Mammary epithelial cell (primary cell): ENCODE measurements at regions of chr10 and their contacts with region 1.

Region 1: GRCh38 chr10:114024876-114025610 is 18.6 kb upstream of the ADRB1 start:
- DNase-seq: no peak
- H3K4me3 ChIP-seq: no peak overlapping the region
- H3K27ac ChIP-seq: no peak overlapping the region
- H3K4me1 ChIP-seq: peaks cover 39% of the 10 kb centered on the region
- H3K27me3 ChIP-seq: no peaks in the 10 kb centered on the region
- CTCF ChIP-seq: no peak

Region 2: DNA sequence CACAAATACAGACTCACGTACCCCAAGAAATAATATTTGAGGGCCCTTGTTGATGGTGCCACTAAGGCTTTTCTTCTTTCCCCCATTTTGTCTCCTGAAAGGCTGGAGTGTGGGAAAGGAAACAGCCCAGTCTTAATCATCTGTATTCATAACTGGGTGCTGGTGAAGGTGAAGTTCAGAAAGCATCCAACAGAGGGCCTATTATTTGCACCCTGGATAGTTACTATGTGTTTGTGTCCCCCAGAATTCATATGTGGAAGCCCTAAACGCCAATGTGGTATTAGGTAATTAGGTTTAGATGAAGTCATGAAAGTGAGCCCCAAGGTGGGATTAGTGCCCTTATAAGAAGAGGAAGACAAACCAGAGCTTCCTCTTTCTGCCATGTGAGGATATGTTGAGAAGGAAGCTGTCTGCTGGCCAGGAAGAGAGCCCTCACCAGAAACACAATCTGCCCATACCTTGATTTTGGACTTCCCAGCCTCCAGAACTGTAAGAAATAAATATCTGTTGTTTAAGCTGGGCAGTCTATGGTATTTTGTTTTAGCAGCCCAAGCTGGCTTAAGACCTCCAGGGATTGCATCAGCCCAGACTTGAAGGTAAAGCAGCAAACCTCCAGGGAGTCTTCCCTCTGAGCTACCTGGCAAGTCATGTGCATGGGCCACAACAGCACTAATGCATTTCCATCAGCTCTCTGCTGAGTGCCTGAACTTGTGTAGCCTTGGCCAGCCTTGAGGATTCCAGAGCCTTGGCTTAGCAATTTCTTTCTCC is 71.4 kb before region 1 on chr10:
- CTCF ChIA-PET with region 1: no interaction called
- dilution Hi-C with region 1: loop called (anchors 5 kb)
- in situ Hi-C with region 1: no loop called
- intact Hi-C with region 1: no loop called
- DNase-seq: no peak
- H3K4me3 ChIP-seq: no peak overlapping the region
- H3K27ac ChIP-seq: no peak overlapping the region
- H3K4me1 ChIP-seq: peaks cover 18% of the 10 kb centered on the region
- H3K27me3 ChIP-seq: no peaks in the 10 kb centered on the region
- CTCF ChIP-seq: peak; percentile 16 to 33

Region 3: GRCh38 chr10:113982769-113983168 is 42.3 kb before region 1 on chr10:
- CTCF ChIA-PET with region 1: no interaction called
- dilution Hi-C with region 1: loop called (anchors 5 kb)
- in situ Hi-C with region 1: no loop called
- intact Hi-C with region 1: no loop called
- DNase-seq: no peak
- H3K4me3 ChIP-seq: no peak overlapping the region
- H3K27ac ChIP-seq: no peak overlapping the region
- H3K4me1 ChIP-seq: no peaks in the 10 kb centered on the region
- H3K27me3 ChIP-seq: no peaks in the 10 kb centered on the region
- CTCF ChIP-seq: no peak